ENCODE measurements at regions of chr20 and their contacts with region 1.

Region 1: DNA sequence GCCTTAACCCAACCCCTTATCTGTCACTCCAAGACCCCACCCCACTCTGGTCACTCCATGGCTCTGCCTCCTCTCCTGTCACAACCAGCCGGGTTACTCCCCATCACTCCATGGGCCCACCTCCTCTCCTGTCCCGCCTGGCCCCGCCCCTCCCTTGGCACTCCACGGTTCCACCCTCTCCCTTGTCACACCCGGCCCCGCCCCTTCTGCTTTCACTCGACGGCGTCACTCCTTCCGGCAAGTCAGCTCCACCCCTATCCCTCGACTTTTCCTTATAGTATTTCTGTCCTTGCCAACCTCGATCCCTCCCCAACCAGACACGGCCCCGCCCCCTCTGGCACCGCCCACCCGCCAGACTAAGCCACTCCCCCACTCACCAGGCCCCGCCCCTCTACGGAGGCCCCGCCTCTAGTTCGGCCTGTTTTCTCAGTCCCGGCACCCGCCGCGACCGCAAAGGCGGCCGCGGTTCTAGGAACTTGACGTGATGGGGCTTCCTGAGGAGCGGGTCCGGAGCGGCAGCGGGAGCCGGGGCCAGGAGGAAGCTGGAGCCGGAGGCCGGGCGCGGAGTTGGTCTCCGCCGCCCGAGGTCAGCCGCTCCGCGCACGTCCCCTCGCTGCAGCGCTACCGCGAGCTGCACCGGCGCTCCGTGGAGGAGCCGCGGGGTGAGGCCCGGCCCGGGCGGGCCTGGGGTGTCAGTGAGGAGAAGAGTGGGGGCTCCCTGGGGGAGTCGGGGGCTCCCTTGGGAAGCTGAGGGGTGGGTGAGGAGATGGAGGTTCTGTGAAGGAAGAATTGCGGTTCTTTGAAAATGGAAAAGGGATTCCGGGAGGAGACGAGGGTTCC is at the start of gene ACSS2:
- DNase-seq: peak; percentile 100
- ATAC-seq: peak; percentile 91
- total RNA-seq, gene ACSS2: 149 TPM

Region 2: GRCh38 chr20:34955232-34956040 is 79.1 kb after region 1 on chr20 and contains the starts of genes GSS and MYH7B:
- intact Hi-C with region 1: loop called (anchors 1 kb)
- DNase-seq: peak; percentile 99
- ATAC-seq: peak; percentile 97
- total RNA-seq, gene GSS: 17.6 TPM
- total RNA-seq, gene MYH7B: 230 TPM

Region 3: GRCh38 chr20:35008411-35009342 is 132.3 kb after region 1 on chr20:
- intact Hi-C with region 1: loop called (anchors 5 kb)
- DNase-seq: peak; percentile 70
- ATAC-seq: peak; percentile 30

Region 4: GRCh38 chr20:35063168-35063567 is 186.8 kb after region 1 on chr20:
- intact Hi-C with region 1: no loop called
- DNase-seq: no peak
- ATAC-seq: no peak